ENCODE measurements at regions of chr20 and their contacts with region 1.

Region 1: DNA sequence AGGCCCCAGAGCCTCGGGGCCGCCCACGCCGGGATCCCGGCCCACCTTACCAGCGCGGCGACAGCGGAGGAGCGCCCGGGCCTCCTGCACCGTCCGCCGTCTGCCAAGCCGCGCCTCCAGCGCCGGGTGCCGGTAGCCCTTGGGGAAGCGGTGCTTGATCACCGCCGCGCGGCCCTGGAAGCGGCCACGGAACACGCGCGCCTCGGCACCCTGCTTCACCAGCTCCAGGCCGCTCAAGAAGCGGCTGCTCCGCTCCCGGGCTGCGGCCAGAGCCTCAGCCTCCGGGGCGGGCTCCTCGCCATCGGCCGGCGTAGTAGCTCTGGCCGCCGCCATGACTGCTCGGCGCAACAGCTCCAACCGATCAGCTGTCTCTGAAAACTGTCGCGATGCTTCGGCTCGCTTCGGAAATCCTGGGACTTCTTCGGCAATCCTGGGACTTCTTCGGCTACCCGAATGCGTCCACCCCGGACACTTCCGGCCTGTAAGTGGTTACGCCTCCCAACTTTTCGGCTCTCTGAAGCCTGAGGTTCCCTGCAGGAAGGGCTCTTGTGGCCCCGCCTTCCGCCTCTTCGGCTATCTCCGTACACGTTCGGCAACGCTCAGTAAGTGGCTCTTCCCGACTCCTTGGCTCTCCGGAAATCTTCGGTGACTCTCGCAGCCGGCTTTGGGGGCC is at the start of gene TP53RK:
- DNase-seq: peak; percentile 95 to 99 (median 98)
- ATAC-seq: peak; percentile 96
- H3K4me3 ChIP-seq: peak within 1 kb of the TSS; percentile 48 to 76
- H3K27ac ChIP-seq: peak within 1 kb of the TSS; percentile 68 to 93 (median 84)
- H3K4me1 ChIP-seq: peaks cover 22% of the 10 kb centered on the region
- H3K27me3 ChIP-seq: no peaks in the 10 kb centered on the region
- CTCF ChIP-seq: peak in 6 of 7 experiments; percentile 24 to 67 (median 50)
- POLR2A ChIP-seq: peak; percentile 76 to 87 (median 86)
- total RNA-seq, gene TP53RK: 6.6 to 11.7 TPM

Region 2: GRCh38 chr20:46206025-46206424 is 483.2 kb before region 1 on chr20:
- intact Hi-C with region 1: no loop called
- DNase-seq: peak in 1 of 4 donors; percentile 64
- ATAC-seq: no peak
- H3K4me3 ChIP-seq: no peak overlapping the region
- H3K27ac ChIP-seq: no peak overlapping the region
- H3K4me1 ChIP-seq: no peaks in the 10 kb centered on the region
- H3K27me3 ChIP-seq: peaks cover 0 to 3% of the 10 kb centered on the region in 2 donors
- CTCF ChIP-seq: no peak
- POLR2A ChIP-seq: no peak

Region 3: GRCh38 chr20:46520976-46521579 is 168.1 kb before region 1 on chr20:
- intact Hi-C with region 1: loop called (anchors 10 kb)
- DNase-seq: peak; percentile 52 to 68 (median 58)
- ATAC-seq: peak; percentile 71
- H3K4me3 ChIP-seq: no peak overlapping the region
- H3K27ac ChIP-seq: no peak overlapping the region
- H3K4me1 ChIP-seq: no peaks in the 10 kb centered on the region
- H3K27me3 ChIP-seq: no peaks in the 10 kb centered on the region
- CTCF ChIP-seq: peak; percentile 49 to 81 (median 61)
- POLR2A ChIP-seq: no peak

Region 4: DNA sequence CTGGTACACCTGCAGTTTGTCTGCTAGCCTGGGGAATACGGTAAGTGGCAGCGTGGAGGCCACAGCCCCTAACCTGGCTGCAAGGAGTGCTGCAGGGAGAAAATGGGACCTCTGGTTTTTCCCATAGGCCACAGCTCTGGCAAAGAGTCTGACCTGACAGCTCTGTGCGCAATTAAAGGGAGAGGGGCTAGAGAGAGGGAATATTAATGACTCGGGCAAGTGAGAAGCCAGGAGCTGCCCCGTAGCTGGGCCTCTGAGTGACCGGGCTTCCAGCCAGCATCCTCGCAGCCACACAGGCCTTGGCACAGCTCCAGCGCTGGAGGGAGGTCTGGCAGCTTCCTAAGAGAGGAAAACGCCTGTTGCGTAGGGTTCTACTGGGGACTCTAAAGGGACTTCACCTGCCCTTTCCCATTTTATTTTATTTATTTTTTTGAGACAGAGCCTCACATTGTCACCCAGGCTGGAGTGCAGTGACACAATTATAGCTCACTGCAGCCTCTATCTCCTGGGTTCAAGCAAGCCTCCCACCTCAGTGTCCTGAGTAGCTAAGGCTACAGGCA is 120.6 kb before region 1 on chr20:
- intact Hi-C with region 1: no loop called
- DNase-seq: peak; percentile 92 to 98 (median 95)
- ATAC-seq: peak; percentile 87
- H3K4me3 ChIP-seq: no peak overlapping the region
- H3K27ac ChIP-seq: peak overlapping the region in 2 of 4 donors; percentile 66 to 74
- H3K4me1 ChIP-seq: peaks cover 19% of the 10 kb centered on the region
- H3K27me3 ChIP-seq: no peaks in the 10 kb centered on the region
- CTCF ChIP-seq: no peak
- POLR2A ChIP-seq: no peak

Region 5: GRCh38 chr20:46607191-46607848 is 81.9 kb before region 1 on chr20:
- intact Hi-C with region 1: no loop called
- DNase-seq: no peak
- ATAC-seq: no peak
- H3K4me3 ChIP-seq: no peak overlapping the region
- H3K27ac ChIP-seq: no peak overlapping the region
- H3K4me1 ChIP-seq: no peaks in the 10 kb centered on the region
- H3K27me3 ChIP-seq: no peaks in the 10 kb centered on the region
- CTCF ChIP-seq: no peak
- POLR2A ChIP-seq: no peak